ENCODE measurements at regions of chr16 and their contacts with region 1.

Region 1: DNA sequence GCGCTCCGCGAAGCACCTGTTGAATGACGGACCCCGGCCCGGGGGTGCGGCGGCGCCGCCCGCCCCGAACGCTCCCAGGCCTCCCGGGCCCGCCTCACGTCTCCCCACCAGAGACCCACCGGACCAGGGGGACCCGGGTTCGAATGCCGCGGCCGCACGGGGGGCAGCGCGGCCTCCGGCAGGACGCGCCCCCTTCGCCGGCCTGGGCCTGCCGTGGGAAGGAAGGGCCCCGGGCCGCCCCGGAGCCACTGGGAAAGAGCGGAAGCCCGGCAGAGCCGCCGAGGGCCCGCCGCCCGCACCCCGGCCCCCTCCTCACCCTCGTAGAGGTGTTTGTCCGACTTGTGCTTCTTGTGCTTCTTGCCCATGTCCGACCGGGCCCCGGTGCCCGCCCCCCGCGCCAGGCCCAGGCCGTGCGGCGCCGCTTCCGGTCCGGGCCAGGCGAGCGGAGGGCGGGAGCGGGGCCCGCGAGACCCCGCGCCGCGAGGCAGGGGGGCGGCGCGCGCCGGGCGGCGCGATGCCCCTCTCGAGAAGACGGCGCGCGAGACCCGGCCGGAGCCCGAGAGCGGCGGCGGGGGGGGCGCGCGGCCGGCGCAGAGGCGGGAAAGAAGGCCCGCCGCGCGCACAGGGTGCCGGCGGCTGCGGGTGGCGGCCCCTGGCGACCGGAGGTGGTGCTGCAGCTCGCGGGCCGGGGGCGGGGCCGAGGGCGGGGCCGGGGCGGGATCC is at the start of gene BRD7:
- DNase-seq: peak; percentile 62
- ATAC-seq: peak; percentile 71
- H3K4me3 ChIP-seq: peak within 1 kb of the TSS; percentile 78 to 87 (median 86)
- H3K27ac ChIP-seq: peak within 1 kb of the TSS; percentile 68
- H3K4me1 ChIP-seq: peaks cover 72% of the 10 kb centered on the region
- H3K27me3 ChIP-seq: no peaks in the 10 kb centered on the region; a peak in 1 of 5 replicates
- CTCF ChIP-seq: peak; percentile 48; the same call in 1 of the 2 replicates
- EP300 ChIP-seq: no peak
- POLR2A ChIP-seq: no peak
- RAD21 ChIP-seq: no peak; the same call in 1 of the 2 replicates
- total RNA-seq, gene BRD7: 149 and 169 TPM in 2 replicates

Region 2: GRCh38 chr16:50024684-50025536 is 343.7 kb before region 1 on chr16 and contains the start of gene CNEP1R1:
- CTCF ChIA-PET with region 1: no interaction called
- POLR2A ChIA-PET with region 1: no interaction called
- in situ Hi-C with region 1: loop called (anchors 25 kb)
- intact Hi-C with region 1: no loop called
- DNase-seq: peak; percentile 97
- ATAC-seq: peak; percentile 97
- H3K4me3 ChIP-seq: peak within 1 kb of the TSS; percentile 71 to 96 (median 85)
- H3K27ac ChIP-seq: peak within 1 kb of the TSS; percentile 56
- H3K4me1 ChIP-seq: peaks cover 44% of the 10 kb centered on the region
- H3K27me3 ChIP-seq: no peaks in the 10 kb centered on the region; a peak in 2 of 5 replicates
- CTCF ChIP-seq: peak; percentile 100
- EP300 ChIP-seq: peak; percentile 35 to 50; a peak in 2 of 4 replicates
- POLR2A ChIP-seq: peak; percentile 57 to 86
- RAD21 ChIP-seq: peak; percentile 100
- total RNA-seq, gene CNEP1R1: 22.9 and 23.6 TPM in 2 replicates

Region 3: GRCh38 chr16:50437769-50438437 is 69.3 kb after region 1 on chr16:
- CTCF ChIA-PET with region 1: no interaction called
- POLR2A ChIA-PET with region 1: no interaction called
- in situ Hi-C with region 1: no loop called
- intact Hi-C with region 1: loop called (anchors 5 kb)
- DNase-seq: peak; percentile 80
- ATAC-seq: peak; percentile 83
- H3K4me3 ChIP-seq: peak overlapping the region in 2 of 3 experiments; percentile 2 to 51; a peak in 1 of 6 replicates
- H3K27ac ChIP-seq: no peak overlapping the region
- H3K4me1 ChIP-seq: peaks cover 43% of the 10 kb centered on the region
- H3K27me3 ChIP-seq: peaks cover 4 to 22% of the 10 kb centered on the region in 2 experiments; a peak in 3 of 5 replicates
- CTCF ChIP-seq: no peak
- EP300 ChIP-seq: peak in 1 of 2 experiments; percentile 63; a peak in 1 of 4 replicates
- POLR2A ChIP-seq: no peak
- RAD21 ChIP-seq: no peak

Region 4: DNA sequence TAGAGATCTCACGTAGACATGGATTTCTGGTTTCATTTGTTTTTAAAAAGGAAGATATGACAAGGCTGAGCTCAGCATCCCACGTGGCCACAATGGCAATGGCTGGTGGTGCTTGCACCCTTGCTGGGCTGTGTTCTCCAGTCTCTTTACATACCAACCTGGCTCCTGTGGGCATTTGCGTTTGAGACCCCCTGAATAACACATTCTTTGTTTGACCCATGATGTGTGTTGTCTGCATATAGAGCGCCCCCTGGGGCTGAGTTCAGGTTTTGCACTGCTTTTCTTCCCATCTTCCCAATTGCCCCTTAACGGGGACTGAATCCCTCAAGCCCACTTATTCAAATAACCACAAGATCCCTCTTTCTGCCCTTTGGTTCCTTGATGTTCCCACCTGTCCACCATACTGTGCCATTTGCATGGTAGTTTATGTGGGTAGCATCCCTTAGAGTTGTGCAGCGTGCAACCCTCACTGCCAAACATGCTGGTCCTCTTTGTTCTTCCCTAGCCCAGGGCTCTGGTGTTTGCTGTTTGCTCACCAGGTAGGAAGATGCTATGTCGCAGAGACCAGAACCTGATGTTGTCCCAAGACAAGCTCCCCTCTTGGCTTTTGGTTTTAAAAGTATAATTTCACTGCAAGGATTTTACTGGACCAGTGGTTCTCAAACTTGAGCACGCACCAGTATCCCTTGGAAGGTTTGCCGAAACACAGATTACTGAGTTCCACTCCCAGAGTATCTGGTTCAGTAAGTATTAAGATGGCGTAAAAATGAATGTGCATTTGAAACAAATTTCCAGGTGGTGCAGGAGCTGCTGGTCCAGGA is 141.2 kb after region 1 on chr16:
- CTCF ChIA-PET with region 1: interaction called, 3 read pairs
- POLR2A ChIA-PET with region 1: interaction called, 5 read pairs
- in situ Hi-C with region 1: loop called (anchors 5 kb)
- intact Hi-C with region 1: no loop called
- DNase-seq: peak; percentile 50
- ATAC-seq: no peak
- H3K4me3 ChIP-seq: peak overlapping the region in 2 of 3 experiments; percentile 19 to 21; a peak in 3 of 6 replicates
- H3K27ac ChIP-seq: no peak overlapping the region
- H3K4me1 ChIP-seq: peaks cover 92% of the 10 kb centered on the region
- H3K27me3 ChIP-seq: no peaks in the 10 kb centered on the region
- CTCF ChIP-seq: peak; percentile 76
- EP300 ChIP-seq: no peak
- POLR2A ChIP-seq: no peak
- RAD21 ChIP-seq: peak; percentile 83

Region 5: GRCh38 chr16:50548125-50548908 is 179.7 kb after region 1 on chr16 and contains the start of gene NKD1:
- CTCF ChIA-PET with region 1: no interaction called
- POLR2A ChIA-PET with region 1: interaction called, 5 read pairs
- in situ Hi-C with region 1: loop called (anchors 5 kb)
- intact Hi-C with region 1: loop called (anchors 2 kb)
- DNase-seq: peak; percentile 84
- ATAC-seq: peak; percentile 87
- H3K4me3 ChIP-seq: peak within 1 kb of the TSS; percentile 93 to 100 (median 98)
- H3K27ac ChIP-seq: peak within 1 kb of the TSS; percentile 88
- H3K4me1 ChIP-seq: peaks cover 62% of the 10 kb centered on the region
- H3K27me3 ChIP-seq: peaks cover 0 to 6% of the 10 kb centered on the region in 2 experiments; a peak in 1 of 5 replicates
- CTCF ChIP-seq: no peak
- EP300 ChIP-seq: peak in 1 of 2 experiments; percentile 4; a peak in 1 of 4 replicates
- POLR2A ChIP-seq: peak; percentile 93 to 95
- RAD21 ChIP-seq: peak; percentile 68
- total RNA-seq, gene NKD1: 59.0 and 70.4 TPM in 2 replicates

Region 6: GRCh38 chr16:50665128-50665878 is 296.7 kb after region 1 on chr16:
- CTCF ChIA-PET with region 1: interaction called, 8 read pairs
- POLR2A ChIA-PET with region 1: interaction called, 4 read pairs
- in situ Hi-C with region 1: loop called (anchors 5 kb)
- intact Hi-C with region 1: loop called (anchors 1 kb)
- DNase-seq: peak; percentile 59
- ATAC-seq: peak; percentile 69
- H3K4me3 ChIP-seq: peak overlapping the region; percentile 57 to 76 (median 69)
- H3K27ac ChIP-seq: no peak overlapping the region
- H3K4me1 ChIP-seq: peaks cover 39% of the 10 kb centered on the region
- H3K27me3 ChIP-seq: no peaks in the 10 kb centered on the region
- CTCF ChIP-seq: peak; percentile 91
- EP300 ChIP-seq: no peak
- POLR2A ChIP-seq: 0 out of 4 replicates have a peak, but pooled peaks of 1 of the 2 experiments have one; percentile 15
- RAD21 ChIP-seq: peak; percentile 92

Region 7: GRCh38 chr16:51107742-51108141 is 739.2 kb after region 1 on chr16:
- CTCF ChIA-PET with region 1: no interaction called
- POLR2A ChIA-PET with region 1: no interaction called
- in situ Hi-C with region 1: no loop called
- intact Hi-C with region 1: loop called (anchors 5 kb)
- DNase-seq: peak; percentile 35
- ATAC-seq: peak; percentile 69
- H3K4me3 ChIP-seq: no peak overlapping the region
- H3K27ac ChIP-seq: no peak overlapping the region
- H3K4me1 ChIP-seq: peaks cover 46% of the 10 kb centered on the region
- H3K27me3 ChIP-seq: no peaks in the 10 kb centered on the region
- CTCF ChIP-seq: no peak
- EP300 ChIP-seq: peak in 1 of 2 experiments; percentile 50; a peak in 1 of 4 replicates
- POLR2A ChIP-seq: no peak
- RAD21 ChIP-seq: no peak